PC-9 (cell line): ENCODE measurements at regions of chr17 and their contacts with region 1.

Region 1: GRCh38 chr17:31494259-31495021 is 103.0 kb downstream of the RAB11FIP4 start:
- DNase-seq: peak; percentile 35 to 80
- H3K4me3 ChIP-seq: no peak overlapping the region; the same call in 1 of the 2 replicates
- H3K27ac ChIP-seq: peak overlapping the region; percentile 79
- H3K4me1 ChIP-seq: peaks cover 80% of the 10 kb centered on the region
- H3K27me3 ChIP-seq: no peaks in the 10 kb centered on the region
- CTCF ChIP-seq: no peak

Region 2: GRCh38 chr17:30565073-30565935 is 929.1 kb before region 1 on chr17:
- CTCF ChIA-PET with region 1: no interaction called
- POLR2A ChIA-PET with region 1: no interaction called
- intact Hi-C with region 1: no loop called
- DNase-seq: peak; percentile 14 to 38
- H3K4me3 ChIP-seq: no peak overlapping the region
- H3K27ac ChIP-seq: no peak overlapping the region
- H3K4me1 ChIP-seq: no peaks in the 10 kb centered on the region
- H3K27me3 ChIP-seq: peaks cover 43% of the 10 kb centered on the region
- CTCF ChIP-seq: no peak

Region 3: GRCh38 chr17:31357831-31358394 is 136.5 kb before region 1 on chr17:
- CTCF ChIA-PET with region 1: interaction called, 11 read pairs
- POLR2A ChIA-PET with region 1: no interaction called
- intact Hi-C with region 1: no loop called
- DNase-seq: no peak
- H3K4me3 ChIP-seq: no peak overlapping the region
- H3K27ac ChIP-seq: no peak overlapping the region
- H3K4me1 ChIP-seq: no peaks in the 10 kb centered on the region
- H3K27me3 ChIP-seq: no peaks in the 10 kb centered on the region
- CTCF ChIP-seq: no peak

Region 4: DNA sequence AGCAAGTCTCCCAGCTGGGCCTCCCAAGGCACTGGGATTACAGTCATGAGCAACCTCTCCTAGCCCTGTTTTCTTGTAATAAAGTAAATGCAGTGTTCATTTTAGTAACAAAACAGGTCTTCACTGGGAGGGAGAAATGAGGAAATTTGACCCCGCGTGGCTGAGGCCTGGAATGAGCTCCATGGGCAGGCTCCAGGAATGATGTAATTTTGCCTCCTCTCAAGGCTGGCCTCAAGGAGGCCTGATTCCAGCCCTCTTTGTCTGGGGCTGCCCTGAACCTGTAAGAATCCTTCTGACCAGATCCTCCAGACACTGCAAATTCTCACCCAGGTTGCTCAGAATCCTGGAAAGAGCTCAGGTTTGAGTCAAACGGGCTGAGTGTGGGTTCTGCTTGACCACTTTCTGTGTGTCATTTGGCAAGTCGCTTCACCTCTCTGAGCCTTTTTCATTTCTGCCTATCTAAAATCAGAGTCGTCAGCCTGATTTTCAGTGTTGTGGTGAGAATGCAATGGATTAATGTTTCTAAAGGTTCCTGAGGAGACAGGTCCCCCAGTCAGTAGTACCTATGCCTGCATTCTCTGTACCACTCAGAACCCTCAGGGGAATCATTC is 45.9 kb before region 1 on chr17:
- CTCF ChIA-PET with region 1: interaction called, 7 read pairs
- POLR2A ChIA-PET with region 1: interaction called, 3 read pairs
- intact Hi-C with region 1: loop called (anchors 1 kb)
- DNase-seq: peak; percentile 41 to 70
- H3K4me3 ChIP-seq: no peak overlapping the region
- H3K27ac ChIP-seq: peak overlapping the region; percentile 38
- H3K4me1 ChIP-seq: peaks cover 54% of the 10 kb centered on the region
- H3K27me3 ChIP-seq: no peaks in the 10 kb centered on the region
- CTCF ChIP-seq: no peak

Region 5: GRCh38 chr17:31596382-31597323 is 102.2 kb after region 1 on chr17:
- CTCF ChIA-PET with region 1: no interaction called
- POLR2A ChIA-PET with region 1: interaction called, 36 read pairs
- intact Hi-C with region 1: no loop called
- DNase-seq: peak; percentile 88 to 94
- H3K4me3 ChIP-seq: no peak overlapping the region
- H3K27ac ChIP-seq: peak overlapping the region; percentile 71
- H3K4me1 ChIP-seq: peaks cover 47% of the 10 kb centered on the region
- H3K27me3 ChIP-seq: no peaks in the 10 kb centered on the region
- CTCF ChIP-seq: no peak